Breast epithelium (tissue), 4 donors: ENCODE measurements at regions of chr6 and their contacts with region 1.

Region 1: DNA sequence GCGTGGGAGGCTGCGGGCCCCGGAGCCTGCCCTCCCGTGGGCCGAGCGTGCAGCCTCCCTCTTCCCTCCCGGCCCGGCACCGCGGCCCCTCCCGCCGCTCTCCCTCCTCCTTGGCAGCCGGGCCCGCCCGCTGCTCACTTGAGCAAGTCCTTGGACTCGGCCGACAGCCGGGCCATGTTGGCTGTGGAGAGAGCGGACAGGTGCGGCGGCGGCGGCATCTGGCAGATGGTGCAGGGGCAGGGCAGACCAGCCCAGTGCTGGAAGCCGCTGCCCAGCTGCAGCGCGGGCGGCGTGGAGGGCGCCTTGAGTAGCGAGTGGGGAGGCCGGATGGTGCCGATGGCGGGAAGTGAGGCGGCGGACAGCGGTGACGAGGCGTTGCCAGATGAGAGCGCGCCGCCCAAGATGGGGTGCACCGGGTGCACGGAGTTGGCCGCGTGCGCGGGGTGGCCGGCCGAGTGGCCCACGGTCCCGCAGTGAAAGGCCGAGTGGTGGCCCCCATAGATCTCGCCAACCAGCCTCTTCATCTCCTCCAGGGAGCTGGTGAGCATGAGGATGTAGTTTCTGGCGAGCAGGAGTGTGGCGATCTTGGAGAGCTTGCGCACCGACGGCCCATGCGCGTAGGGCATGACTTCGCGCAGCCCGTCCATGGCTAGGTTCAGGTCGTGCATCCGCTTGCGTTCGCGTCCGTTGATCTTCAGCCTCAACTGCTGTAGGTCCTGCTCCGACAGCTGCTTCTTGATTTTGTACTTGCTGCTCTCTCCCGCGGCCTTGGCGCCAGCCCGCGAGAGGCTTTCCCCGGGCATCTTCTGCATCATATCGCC is 766 bp downstream of the OLIG3 start:
- DNase-seq: no peak
- H3K4me3 ChIP-seq: peak overlapping the region in 1 of 3 donors; percentile 47
- H3K27ac ChIP-seq: no peak overlapping the region
- H3K4me1 ChIP-seq: peaks cover 3 to 7% of the 10 kb centered on the region in 2 donors
- H3K27me3 ChIP-seq: peaks cover 5 to 95% of the 10 kb centered on the region in 2 donors
- CTCF ChIP-seq: no peak
- POLR2A ChIP-seq: no peak

Region 2: DNA sequence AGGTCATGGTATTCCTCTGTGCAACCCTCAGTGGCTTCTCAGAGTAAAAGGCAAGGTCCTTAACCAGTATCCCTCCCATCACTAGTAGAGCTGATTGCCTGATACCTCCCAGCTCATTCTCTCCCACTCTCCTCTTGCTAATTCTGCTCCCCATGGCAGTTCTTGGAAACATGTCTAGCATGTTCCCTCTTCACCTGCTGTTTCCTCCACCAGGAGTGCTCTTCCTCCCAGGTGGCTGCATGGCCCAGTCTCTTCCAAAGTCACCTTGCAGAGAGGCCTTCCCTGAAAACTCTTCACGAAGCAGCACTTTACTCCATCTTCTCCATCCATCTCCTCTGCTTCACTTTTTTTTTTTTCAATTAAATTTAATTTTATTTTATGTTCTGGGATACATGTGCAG is 37.0 kb after region 1 on chr6:
- intact Hi-C with region 1: loop called (anchors 1 kb)
- DNase-seq: no peak
- H3K4me3 ChIP-seq: no peak overlapping the region
- H3K27ac ChIP-seq: no peak overlapping the region
- H3K4me1 ChIP-seq: no peaks in the 10 kb centered on the region
- H3K27me3 ChIP-seq: no peaks in the 10 kb centered on the region
- CTCF ChIP-seq: no peak
- POLR2A ChIP-seq: no peak

Region 3: GRCh38 chr6:137543114-137543513 is 49.7 kb after region 1 on chr6:
- intact Hi-C with region 1: no loop called
- DNase-seq: no peak
- H3K4me3 ChIP-seq: no peak overlapping the region
- H3K27ac ChIP-seq: no peak overlapping the region
- H3K4me1 ChIP-seq: no peaks in the 10 kb centered on the region
- H3K27me3 ChIP-seq: no peaks in the 10 kb centered on the region
- CTCF ChIP-seq: no peak
- POLR2A ChIP-seq: no peak